Natural killer cell (primary cell): ENCODE measurements at regions of chr2 and their contacts with region 1.

Region 1: DNA sequence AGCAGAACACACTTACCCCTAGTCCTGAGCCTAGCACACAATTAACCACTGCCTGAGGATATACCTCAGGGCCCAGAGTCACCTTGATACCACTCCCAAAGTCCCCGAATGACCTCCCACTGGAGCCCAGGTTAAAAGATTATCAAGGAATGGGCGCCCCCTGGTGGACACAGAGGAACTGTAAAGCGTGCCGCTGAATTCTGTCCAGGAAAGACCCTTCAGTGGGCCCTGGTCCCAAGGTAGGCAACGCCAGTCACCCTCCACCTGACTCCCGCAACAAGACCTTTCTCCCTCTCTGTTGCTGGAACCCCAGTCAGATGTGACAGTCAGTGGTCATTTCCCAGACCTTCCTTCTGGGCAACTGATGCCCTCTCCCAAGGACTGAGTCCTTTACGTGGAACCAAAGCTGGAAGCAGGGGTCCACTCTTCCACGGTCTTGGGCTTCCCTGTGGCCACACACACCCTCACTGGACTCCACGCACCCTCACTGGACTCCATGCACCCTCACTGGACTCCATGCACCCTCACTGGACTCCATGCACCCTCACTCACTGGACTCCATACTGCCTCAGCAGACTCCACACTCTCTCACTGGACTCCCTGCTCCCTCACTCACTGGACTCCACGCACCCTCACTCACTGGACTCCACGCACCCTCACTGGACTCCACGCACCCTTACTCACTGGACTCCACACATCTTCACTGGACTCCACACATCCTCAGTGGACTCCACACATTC is 7.1 kb downstream of the PTMA start:
- DNase-seq: peak; percentile 78 to 87
- ATAC-seq: peak in 1 of 3 donors; percentile 25
- H3K4me3 ChIP-seq: no peak overlapping the region
- H3K4me3 Mint-ChIP-seq: peak overlapping the region; percentile 70
- H3K27ac ChIP-seq: no peak overlapping the region
- H3K27ac Mint-ChIP-seq: peak overlapping the region; percentile 97
- H3K4me1 ChIP-seq: peaks cover 47% of the 10 kb centered on the region
- H3K4me1 Mint-ChIP-seq: peaks cover 31 to 48% of the 10 kb centered on the region in 2 donors
- H3K27me3 ChIP-seq: no peaks in the 10 kb centered on the region
- H3K27me3 Mint-ChIP-seq: peaks cover 0 to 4% of the 10 kb centered on the region in 2 donors
- CTCF ChIP-seq: peak; percentile 93

Region 2: GRCh38 chr2:231612179-231613053 is 103.0 kb before region 1 on chr2:
- intact Hi-C with region 1: loop called (anchors 1 kb)
- DNase-seq: peak; percentile 84 to 92
- ATAC-seq: peak; percentile 84 to 88 (median 84)
- H3K4me3 ChIP-seq: no peak overlapping the region
- H3K4me3 Mint-ChIP-seq: peak overlapping the region; percentile 58
- H3K27ac ChIP-seq: peak overlapping the region; percentile 65
- H3K27ac Mint-ChIP-seq: peak overlapping the region in 1 of 2 donors; percentile 80
- H3K4me1 ChIP-seq: peaks cover 32% of the 10 kb centered on the region
- H3K4me1 Mint-ChIP-seq: peaks cover 11 to 25% of the 10 kb centered on the region in 2 donors
- H3K27me3 ChIP-seq: peaks cover 2% of the 10 kb centered on the region
- H3K27me3 Mint-ChIP-seq: peaks cover 0 to 20% of the 10 kb centered on the region in 2 donors
- CTCF ChIP-seq: peak; percentile 86

Region 3: DNA sequence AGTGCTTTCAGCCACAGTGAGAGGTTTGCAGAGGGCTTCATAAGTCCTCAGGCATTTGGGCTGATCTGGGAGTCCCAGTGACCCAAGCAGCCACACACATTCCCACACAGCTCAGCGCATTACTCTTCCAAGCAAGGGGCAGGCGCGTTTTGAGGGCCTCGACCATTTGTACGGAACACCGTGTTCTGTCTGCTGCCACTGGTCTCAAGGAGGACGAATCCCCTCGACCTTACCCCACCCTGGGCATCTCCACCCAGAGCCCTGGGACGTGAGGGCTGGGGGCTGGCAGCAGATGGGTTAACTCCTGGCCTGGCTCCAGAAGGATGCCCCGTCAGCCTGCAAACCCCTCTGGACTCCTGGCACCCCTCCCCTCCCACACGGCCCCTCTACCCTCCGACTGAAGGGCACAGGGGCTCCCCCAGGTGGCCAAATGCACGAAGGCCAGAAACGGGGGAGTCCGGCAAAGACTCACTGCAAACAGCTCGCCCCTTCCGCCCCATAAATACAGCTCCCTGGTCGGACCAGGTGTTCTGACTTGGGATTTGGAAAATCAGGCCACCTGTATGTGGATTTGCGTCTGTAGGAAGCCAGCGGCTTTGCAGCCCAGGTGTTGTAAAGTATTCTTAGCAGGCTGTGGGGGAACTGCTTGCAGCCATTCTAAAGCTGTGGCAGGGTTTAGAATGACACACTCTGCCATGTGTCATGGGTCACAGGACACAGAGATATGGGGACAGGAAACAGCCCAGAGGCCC is 40.7 kb before region 1 on chr2:
- intact Hi-C with region 1: loop called (anchors 1 kb)
- DNase-seq: peak; percentile 56 to 72
- ATAC-seq: peak; percentile 74 to 81 (median 78)
- H3K4me3 ChIP-seq: no peak overlapping the region
- H3K4me3 Mint-ChIP-seq: no peak overlapping the region
- H3K27ac ChIP-seq: peak overlapping the region; percentile 69
- H3K27ac Mint-ChIP-seq: peak overlapping the region in 1 of 2 donors; percentile 68
- H3K4me1 ChIP-seq: peaks cover 51% of the 10 kb centered on the region
- H3K4me1 Mint-ChIP-seq: peaks cover 13 to 21% of the 10 kb centered on the region in 2 donors
- H3K27me3 ChIP-seq: no peaks in the 10 kb centered on the region
- H3K27me3 Mint-ChIP-seq: no peaks in the 10 kb centered on the region
- CTCF ChIP-seq: peak; percentile 67

Region 4: GRCh38 chr2:231687133-231687852 is 28.1 kb before region 1 on chr2:
- intact Hi-C with region 1: loop called (anchors 1 kb)
- DNase-seq: peak; percentile 57 to 78
- ATAC-seq: peak; percentile 69 to 96 (median 95)
- H3K4me3 ChIP-seq: no peak overlapping the region
- H3K4me3 Mint-ChIP-seq: no peak overlapping the region
- H3K27ac ChIP-seq: no peak overlapping the region
- H3K27ac Mint-ChIP-seq: no peak overlapping the region
- H3K4me1 ChIP-seq: peaks cover 7% of the 10 kb centered on the region
- H3K4me1 Mint-ChIP-seq: peaks cover 0 to 6% of the 10 kb centered on the region in 2 donors
- H3K27me3 ChIP-seq: no peaks in the 10 kb centered on the region
- H3K27me3 Mint-ChIP-seq: peaks cover 0 to 5% of the 10 kb centered on the region in 2 donors
- CTCF ChIP-seq: peak; percentile 48